ENCODE measurements at regions of chr19 and their contacts with region 1.

Region 1: DNA sequence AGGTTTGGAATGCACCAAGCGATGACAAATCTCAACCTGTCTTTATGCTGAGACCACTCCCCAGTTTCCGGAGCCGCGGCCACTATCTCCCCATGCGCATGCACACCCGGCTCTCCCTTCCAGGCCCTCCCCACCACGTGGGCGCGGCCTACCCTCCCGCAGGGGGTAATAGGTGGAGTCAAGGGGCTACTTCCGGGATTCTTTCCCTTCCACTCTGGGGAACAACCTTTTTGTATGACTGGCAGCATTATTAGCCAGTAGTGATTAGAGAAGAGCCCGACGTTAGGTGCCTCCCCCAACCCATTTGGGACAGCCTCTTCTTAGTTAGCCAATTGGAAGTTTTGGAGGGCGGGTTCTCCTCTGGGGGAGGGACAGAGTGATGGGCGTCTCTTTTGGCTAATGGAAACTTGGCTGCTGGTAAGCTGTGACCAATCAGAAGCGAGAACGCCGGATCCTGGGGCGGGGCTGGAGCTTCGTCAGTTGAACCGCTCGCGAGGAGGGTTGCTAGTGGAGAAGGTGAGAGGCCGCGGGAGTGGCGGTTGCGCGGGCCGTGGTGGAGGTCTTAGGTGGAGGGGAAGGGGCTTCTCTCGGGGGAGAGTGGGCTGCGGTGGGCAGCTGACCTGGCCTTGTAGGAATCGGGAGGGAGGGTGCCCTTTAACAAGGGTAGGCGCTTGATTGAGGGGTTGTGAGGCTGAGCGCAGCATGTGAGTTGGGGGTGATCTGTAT is at the start of gene CCDC61:
- DNase-seq: peak; percentile 98

Region 2: DNA sequence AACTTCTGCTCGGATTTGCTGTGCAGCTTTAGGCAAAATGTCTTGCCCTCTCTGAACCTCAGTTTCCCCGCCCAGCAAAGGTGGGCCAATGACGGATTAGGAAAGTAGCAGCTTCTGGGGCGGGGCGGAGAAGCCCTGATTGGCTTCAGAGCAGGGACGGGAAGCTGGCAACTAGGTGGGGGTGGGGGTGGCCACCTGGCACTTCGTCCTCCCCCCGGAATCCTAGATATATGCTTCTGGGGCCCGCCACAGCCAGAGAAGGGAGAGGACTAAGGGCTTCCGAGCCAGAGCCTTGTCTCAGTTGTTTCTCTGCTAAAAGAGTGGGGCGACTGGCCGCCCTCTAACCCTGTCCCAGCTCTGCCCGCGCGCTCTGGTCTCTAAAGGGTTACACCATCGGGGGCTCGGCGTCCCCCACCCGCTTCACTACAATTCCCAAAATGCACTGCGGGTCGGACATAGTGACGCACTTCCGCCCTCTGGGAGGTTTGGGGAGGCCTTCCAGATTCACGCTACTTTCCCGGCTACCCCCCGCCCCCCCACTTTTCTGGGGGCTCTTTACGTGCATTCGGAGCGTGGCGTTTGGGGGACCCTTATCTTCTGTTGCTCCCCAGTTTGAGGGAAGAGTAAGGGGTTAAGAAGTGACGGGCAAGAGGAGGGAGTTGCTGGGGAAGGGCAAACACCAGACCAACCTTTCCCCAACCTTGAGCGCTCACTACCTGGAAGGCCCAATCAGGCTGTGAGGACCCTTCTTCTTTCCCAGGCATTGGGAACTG is 108.5 kb before region 1 on chr19:
- CTCF ChIA-PET with region 1: no interaction called
- POLR2A ChIA-PET with region 1: interaction called, 13 read pairs
- DNase-seq: peak; percentile 87

Region 3: DNA sequence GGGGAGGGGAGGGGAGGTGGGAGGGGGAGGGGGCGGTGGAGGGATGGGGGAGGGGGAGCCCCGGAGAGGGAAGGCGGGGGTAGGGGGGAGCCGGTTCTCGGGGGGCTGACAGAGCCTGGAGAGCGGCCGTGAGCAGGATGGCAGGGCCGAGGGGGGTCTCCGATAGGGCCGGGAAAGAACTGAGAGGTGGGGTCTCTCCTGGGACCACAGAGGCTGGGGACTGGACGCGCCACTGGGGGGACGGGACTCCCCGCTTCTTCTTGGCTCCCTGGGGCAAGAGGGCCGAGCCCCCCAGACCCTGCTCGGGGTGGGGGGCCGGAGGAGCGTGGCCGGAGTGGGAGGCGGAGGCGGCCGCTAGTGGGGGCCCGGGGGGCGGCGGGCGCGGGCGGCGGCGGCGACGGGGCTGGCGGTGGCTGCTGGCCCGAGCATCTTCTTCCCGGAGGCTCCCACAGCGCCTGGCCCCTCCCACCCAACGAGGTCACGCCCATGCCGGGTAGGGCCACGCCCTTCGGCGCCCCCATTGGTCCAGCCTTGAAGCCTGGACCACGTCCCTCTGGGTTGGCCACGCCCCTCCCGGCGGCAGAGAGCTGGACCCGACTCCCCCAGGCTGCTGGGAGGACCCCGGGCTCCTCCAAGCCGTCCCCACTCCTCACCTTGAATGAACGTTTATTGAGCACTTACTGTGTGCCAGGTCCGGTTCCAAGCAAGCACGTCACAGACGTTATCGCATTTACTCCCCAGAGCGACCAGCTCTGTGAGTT is 21.4 kb before region 1 on chr19 and contains the start of gene NOVA2:
- CTCF ChIA-PET with region 1: no interaction called
- POLR2A ChIA-PET with region 1: interaction called, 42 read pairs
- DNase-seq: peak; percentile 99

Region 4: DNA sequence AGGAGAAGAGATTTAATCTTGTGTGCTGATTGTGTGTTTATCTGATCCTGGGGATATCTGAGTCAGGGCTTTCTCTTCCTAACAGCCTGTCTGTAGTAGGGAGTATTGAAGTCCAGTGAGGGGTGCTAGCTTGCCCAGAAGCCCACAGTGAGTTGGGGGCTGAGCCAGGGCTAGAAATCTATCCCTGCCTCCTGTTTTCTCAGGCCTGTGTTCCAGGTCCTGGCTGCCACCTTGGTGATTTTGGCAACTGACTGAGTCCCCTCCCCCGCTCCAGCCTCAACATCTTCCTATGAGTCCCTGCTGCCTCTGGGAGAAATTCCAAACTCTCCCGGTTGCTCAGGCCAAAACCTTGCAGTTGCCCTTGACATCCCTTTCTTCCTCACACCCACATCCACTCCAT is 13.8 kb before region 1 on chr19:
- CTCF ChIA-PET with region 1: interaction called, 3 read pairs
- POLR2A ChIA-PET with region 1: interaction called, 42 read pairs
- DNase-seq: no peak

Measured in HEK293T (cell line).